Activated T-helper 1 cell treated with anti-CD3 and anti-CD28 coated beads, Interleukin-12 subunit alpha, Interleukin-12 subunit beta, Interleukin-2, Interleukin-4 antibody, amounts not matched to agents 30 ng/mL and 10 ng/mL and 1 ng/mL, durations not matched to agents 14 hours and 24 hours and 36 hours (primary cell): ENCODE measurements at regions of chr6 and their contacts with region 1.

Region 1: DNA sequence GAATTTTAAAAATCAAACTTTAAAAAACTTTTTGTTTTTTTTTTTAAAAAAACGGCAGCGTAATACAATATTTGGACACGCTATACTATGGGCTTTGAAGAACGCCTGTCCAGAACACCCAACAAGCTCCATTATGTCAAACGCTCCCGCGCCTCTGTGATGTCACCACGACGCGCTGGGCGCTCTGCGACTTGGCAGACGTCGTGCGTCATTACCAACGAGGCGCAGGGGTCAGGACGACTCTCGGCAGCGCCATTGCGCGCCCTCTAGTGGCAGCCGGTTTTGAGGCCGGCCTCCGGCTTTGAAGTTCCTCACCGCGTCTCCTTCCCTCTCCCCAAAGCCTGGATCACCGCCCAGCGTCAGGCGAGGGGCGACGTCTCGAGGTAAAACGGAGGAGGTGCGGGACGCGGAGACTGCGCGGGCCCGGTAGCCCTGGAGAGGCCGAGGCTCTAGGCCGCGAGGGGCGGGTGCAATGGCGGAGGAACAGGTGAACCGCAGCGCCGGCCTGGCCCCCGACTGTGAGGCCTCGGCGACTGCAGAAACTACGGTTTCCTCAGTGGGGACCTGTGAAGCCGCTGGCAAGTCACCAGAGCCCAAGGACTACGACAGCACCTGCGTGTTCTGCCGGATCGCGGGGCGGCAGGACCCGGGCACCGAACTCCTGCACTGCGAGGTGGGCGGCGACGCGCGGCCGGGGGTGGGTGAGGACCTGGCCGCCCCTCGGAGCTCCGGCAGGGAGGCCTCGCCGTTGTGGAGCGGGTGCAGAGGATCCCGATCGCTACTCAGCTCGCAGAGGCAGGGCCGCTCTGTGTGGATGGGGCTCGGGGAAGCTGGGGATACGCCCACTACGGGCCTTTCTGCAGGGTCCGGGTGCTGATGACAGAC is at the start of gene HINT3:
- DNase-seq: peak; percentile 96
- H3K4me3 Mint-ChIP-seq: no peak within 1 kb of the TSS
- H3K27ac Mint-ChIP-seq: peak within 1 kb of the TSS; percentile 72
- H3K4me1 Mint-ChIP-seq: peaks cover 5% of the 10 kb centered on the region
- H3K27me3 Mint-ChIP-seq: no peaks in the 10 kb centered on the region
- total RNA-seq, gene HINT3: 9.4 and 9.6 TPM in 2 replicates

Region 2: DNA sequence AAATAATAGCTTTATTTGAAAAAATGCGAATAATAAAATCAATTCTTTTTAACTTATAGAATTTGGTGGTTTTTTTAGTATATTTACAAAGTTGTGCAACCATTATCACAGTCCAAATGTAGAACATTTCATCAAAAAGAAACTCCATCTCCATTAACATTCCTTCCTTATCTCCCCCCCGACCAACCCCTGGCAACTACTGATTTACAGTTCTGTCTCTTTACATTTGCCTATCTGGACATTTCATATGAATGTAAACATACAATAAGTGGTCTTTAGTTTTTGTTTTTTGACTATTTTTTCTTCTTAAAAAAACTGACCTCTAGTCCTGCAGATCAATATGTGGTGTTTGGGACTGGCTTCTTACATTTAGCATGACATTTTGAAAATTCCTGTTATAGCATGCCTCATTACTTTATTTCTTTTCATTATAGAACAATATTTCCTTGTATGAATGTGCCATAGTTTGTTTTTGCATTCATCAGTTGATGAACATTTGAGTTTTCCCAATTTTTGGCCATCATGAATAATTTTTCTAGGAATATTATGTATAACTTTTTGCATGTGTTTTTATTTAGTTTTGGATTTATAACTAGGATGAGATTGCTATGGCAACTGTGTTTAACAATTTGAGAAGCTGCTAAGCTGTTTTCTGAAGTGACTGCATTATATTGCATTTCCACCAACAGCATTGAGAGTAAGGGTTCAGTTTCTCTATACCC is 1808.4 kb before region 1 on chr6:
- intact Hi-C with region 1: no loop called
- DNase-seq: no peak
- H3K4me3 Mint-ChIP-seq: no peak overlapping the region
- H3K27ac Mint-ChIP-seq: no peak overlapping the region
- H3K4me1 Mint-ChIP-seq: no peaks in the 10 kb centered on the region
- H3K27me3 Mint-ChIP-seq: no peaks in the 10 kb centered on the region

Region 3: GRCh38 chr6:125749173-125749864 is 207.4 kb before region 1 on chr6 and contains the start of gene HEY2:
- intact Hi-C with region 1: loop called (anchors 1 kb)
- DNase-seq: peak; percentile 83
- H3K4me3 Mint-ChIP-seq: peak within 1 kb of the TSS; percentile 83
- H3K27ac Mint-ChIP-seq: peak within 1 kb of the TSS; percentile 49
- H3K4me1 Mint-ChIP-seq: peaks cover 45% of the 10 kb centered on the region
- H3K27me3 Mint-ChIP-seq: peaks cover 67% of the 10 kb centered on the region
- total RNA-seq, gene HEY2: not detected in 2 replicates

Region 4: GRCh38 chr6:125858427-125859320 is 98.1 kb before region 1 on chr6:
- intact Hi-C with region 1: loop called (anchors 1 kb)
- DNase-seq: peak; percentile 6
- H3K4me3 Mint-ChIP-seq: no peak overlapping the region
- H3K27ac Mint-ChIP-seq: peak overlapping the region; percentile 9
- H3K4me1 Mint-ChIP-seq: no peaks in the 10 kb centered on the region
- H3K27me3 Mint-ChIP-seq: no peaks in the 10 kb centered on the region

Region 5: GRCh38 chr6:125904871-125905270 is 51.9 kb before region 1 on chr6:
- intact Hi-C with region 1: loop called (anchors 1 kb)
- DNase-seq: peak; percentile 42
- H3K4me3 Mint-ChIP-seq: peak overlapping the region; percentile 60
- H3K27ac Mint-ChIP-seq: peak overlapping the region; percentile 93
- H3K4me1 Mint-ChIP-seq: peaks cover 63% of the 10 kb centered on the region
- H3K27me3 Mint-ChIP-seq: no peaks in the 10 kb centered on the region

Region 6: GRCh38 chr6:125918681-125919566 is 37.8 kb before region 1 on chr6:
- intact Hi-C with region 1: loop called (anchors 1 kb)
- DNase-seq: peak; percentile 66
- H3K4me3 Mint-ChIP-seq: peak overlapping the region; percentile 88
- H3K27ac Mint-ChIP-seq: peak overlapping the region; percentile 94
- H3K4me1 Mint-ChIP-seq: peaks cover 58% of the 10 kb centered on the region
- H3K27me3 Mint-ChIP-seq: no peaks in the 10 kb centered on the region

Region 7: DNA sequence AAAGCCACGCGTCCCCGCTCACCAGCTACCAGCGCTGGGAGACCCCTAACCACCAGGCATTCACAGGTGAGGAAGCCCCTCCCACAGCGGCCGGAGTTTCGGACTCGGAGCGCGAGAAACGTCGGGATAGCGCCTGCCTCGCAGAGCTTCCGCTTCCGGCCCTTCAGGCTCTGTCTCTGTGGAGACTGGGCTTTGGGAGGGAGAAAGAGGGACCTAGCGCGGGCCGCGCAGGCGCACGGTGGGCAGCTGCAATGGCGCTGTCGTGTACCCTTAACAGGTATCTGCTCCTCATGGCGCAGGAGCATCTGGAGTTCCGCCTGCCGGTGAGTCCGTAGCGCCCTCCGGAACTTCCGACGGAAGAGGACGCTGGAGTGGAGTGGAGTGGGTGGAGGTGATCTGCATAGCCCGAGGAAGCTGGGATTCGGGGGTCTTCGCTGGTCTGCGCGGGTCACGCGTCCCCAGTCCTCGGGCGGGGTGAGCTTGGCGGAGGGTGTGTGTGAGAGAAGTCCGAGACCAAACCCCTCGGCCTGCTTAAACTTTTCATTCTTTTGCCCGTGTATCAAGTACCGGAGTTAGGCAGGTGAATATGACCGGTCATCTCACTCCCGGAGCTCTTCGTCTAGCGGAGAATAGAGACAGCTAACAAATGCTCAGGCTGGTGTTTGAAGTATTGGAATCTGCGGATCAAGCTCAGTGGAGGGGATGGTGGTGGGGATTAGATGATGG is 29.7 kb after region 1 on chr6 and contains the start of gene TRMT11:
- intact Hi-C with region 1: loop called (anchors 1 kb)
- DNase-seq: peak; percentile 72
- H3K4me3 Mint-ChIP-seq: no peak within 1 kb of the TSS
- H3K27ac Mint-ChIP-seq: no peak within 1 kb of the TSS
- H3K4me1 Mint-ChIP-seq: peaks cover 8% of the 10 kb centered on the region
- H3K27me3 Mint-ChIP-seq: no peaks in the 10 kb centered on the region
- total RNA-seq, gene TRMT11: 27.9 and 29.1 TPM in 2 replicates